HCT116 (cell line): ENCODE measurements at regions of chr4 and their contacts with region 1.

Region 1: DNA sequence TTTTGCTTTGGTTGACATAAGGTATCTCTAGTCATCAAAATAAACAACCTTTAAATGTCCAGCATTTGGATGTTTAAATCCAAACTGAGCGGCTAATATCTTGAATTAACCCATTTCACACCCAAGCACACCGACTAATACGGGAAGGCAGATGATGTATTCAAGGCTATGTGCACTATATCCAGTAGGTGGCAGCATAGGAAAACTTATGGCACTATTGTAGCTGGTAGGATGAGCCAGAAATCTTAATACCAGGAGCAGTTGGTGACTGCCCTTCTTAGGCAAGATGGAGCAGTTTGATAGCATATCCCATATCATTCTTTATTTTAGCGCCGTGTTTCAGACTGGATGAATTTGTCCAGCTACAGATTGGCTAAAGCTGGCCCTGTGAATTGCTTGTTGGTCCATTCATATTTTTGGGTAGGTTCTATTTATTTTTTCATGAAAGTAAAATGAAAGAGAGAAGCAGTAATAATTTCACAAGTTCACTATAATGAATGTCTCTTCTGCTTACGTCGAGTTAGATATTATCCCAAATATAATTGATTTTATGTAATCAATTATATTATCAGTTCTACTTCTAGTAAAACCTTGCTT is 24.4 kb downstream of the UCHL1 start:
- DNase-seq: peak; percentile 82
- ATAC-seq: peak; percentile 100
- H3K4me3 ChIP-seq: no peak overlapping the region
- H3K27ac ChIP-seq: no peak overlapping the region
- H3K4me1 ChIP-seq: no peaks in the 10 kb centered on the region
- H3K27me3 ChIP-seq: no peaks in the 10 kb centered on the region
- CTCF ChIP-seq: peak; percentile 75 to 91 (median 90)
- POLR2A ChIP-seq: no peak
- RAD21 ChIP-seq: peak; percentile 99

Region 2: DNA sequence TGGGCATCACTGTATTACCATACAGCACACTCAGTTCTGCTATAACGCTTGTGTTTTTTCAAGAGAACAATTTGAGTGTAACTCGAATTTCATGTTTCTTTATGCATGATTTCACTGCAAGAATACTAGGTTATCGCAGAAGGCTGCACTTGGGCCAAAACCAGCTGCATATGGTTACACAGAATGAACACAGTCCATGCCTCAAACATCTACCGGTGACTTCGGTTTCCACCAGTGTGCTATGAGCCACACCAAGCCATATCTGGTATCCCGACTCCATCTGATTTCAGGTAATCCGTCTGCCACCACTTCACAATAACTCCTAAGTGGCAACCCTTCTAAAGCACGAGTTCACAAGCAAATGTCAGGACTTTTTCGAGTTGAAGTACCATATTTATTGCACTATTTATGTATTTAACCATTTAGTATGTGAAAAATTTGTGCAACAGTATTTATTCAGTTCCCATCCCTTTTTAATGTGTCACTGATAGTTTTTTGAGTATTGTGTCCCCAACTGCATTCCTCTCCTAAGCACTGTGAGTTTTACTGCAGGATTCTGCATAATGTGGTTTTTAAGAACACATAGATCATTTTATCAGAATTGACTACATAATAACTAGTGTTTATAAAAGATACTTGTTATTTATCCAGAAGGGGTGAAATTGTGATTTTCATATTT is 178.6 kb before region 1 on chr4:
- CTCF ChIA-PET with region 1: no interaction called
- POLR2A ChIA-PET with region 1: no interaction called
- RAD21 ChIA-PET with region 1: no interaction called
- intact Hi-C with region 1: no loop called
- DNase-seq: no peak
- ATAC-seq: no peak
- H3K4me3 ChIP-seq: no peak overlapping the region
- H3K27ac ChIP-seq: no peak overlapping the region
- H3K4me1 ChIP-seq: peaks cover 0 to 3% of the 10 kb centered on the region in 2 experiments; a peak in 1 of 4 replicates
- H3K27me3 ChIP-seq: no peaks in the 10 kb centered on the region
- CTCF ChIP-seq: no peak
- POLR2A ChIP-seq: no peak
- RAD21 ChIP-seq: no peak

Region 3: GRCh38 chr4:41141900-41142299 is 139.2 kb before region 1 on chr4:
- CTCF ChIA-PET with region 1: no interaction called
- POLR2A ChIA-PET with region 1: no interaction called
- RAD21 ChIA-PET with region 1: no interaction called
- intact Hi-C with region 1: no loop called
- DNase-seq: no peak
- ATAC-seq: no peak
- H3K4me3 ChIP-seq: no peak overlapping the region
- H3K27ac ChIP-seq: peak overlapping the region; percentile 87
- H3K4me1 ChIP-seq: peaks cover 55% of the 10 kb centered on the region in 2 experiments
- H3K27me3 ChIP-seq: no peaks in the 10 kb centered on the region
- CTCF ChIP-seq: no peak
- POLR2A ChIP-seq: no peak
- RAD21 ChIP-seq: no peak

Region 4: DNA sequence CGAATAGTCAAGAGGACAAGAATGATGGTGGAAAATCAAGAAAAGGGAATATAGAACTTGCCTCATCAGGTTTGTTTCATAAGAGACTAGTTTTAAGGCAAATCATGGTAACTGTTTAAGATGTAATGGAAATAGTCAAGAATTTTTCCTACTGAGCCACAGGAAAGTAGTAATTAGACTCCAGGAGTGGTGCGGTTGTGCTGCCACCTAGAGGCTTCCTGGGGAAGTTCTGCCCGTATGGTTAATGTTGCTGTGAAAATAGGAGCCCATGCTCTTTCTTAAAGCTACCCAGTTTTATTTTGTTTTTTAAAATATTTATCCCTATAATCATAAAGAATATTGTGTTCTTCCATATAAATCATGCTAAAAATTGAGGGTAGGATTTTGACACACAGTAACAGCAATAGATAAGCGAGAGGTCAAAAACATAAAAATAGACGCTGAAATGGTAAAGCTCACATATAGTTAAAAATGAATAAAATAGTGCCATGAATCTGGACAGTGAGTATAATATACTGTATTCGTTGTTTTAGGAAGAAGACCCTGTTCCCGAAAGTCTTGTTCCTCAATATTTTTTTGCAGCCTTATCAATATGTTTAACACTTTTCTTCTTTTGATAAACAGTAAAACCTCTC is 380.4 kb after region 1 on chr4:
- CTCF ChIA-PET with region 1: interaction called, 105 read pairs
- POLR2A ChIA-PET with region 1: interaction called, 5 read pairs
- RAD21 ChIA-PET with region 1: interaction called, 9 to 13 read pairs
- intact Hi-C with region 1: loop called (anchors 1 kb)
- DNase-seq: peak; percentile 31
- ATAC-seq: peak; percentile 86
- H3K4me3 ChIP-seq: no peak overlapping the region
- H3K27ac ChIP-seq: no peak overlapping the region
- H3K4me1 ChIP-seq: peaks cover 0 to 6% of the 10 kb centered on the region in 2 experiments; a peak in 1 of 4 replicates
- H3K27me3 ChIP-seq: no peaks in the 10 kb centered on the region
- CTCF ChIP-seq: peak; percentile 70 to 96 (median 90)
- POLR2A ChIP-seq: no peak
- RAD21 ChIP-seq: peak; percentile 90

Region 5: GRCh38 chr4:41734366-41734765 is 453.2 kb after region 1 on chr4:
- CTCF ChIA-PET with region 1: no interaction called
- POLR2A ChIA-PET with region 1: no interaction called
- RAD21 ChIA-PET with region 1: no interaction called
- intact Hi-C with region 1: no loop called
- DNase-seq: no peak
- ATAC-seq: no peak
- H3K4me3 ChIP-seq: no peak overlapping the region
- H3K27ac ChIP-seq: no peak overlapping the region
- H3K4me1 ChIP-seq: no peaks in the 10 kb centered on the region
- H3K27me3 ChIP-seq: peaks cover 7% of the 10 kb centered on the region; the same call in 1 of the 2 replicates
- CTCF ChIP-seq: no peak
- POLR2A ChIP-seq: no peak
- RAD21 ChIP-seq: no peak

Region 6: DNA sequence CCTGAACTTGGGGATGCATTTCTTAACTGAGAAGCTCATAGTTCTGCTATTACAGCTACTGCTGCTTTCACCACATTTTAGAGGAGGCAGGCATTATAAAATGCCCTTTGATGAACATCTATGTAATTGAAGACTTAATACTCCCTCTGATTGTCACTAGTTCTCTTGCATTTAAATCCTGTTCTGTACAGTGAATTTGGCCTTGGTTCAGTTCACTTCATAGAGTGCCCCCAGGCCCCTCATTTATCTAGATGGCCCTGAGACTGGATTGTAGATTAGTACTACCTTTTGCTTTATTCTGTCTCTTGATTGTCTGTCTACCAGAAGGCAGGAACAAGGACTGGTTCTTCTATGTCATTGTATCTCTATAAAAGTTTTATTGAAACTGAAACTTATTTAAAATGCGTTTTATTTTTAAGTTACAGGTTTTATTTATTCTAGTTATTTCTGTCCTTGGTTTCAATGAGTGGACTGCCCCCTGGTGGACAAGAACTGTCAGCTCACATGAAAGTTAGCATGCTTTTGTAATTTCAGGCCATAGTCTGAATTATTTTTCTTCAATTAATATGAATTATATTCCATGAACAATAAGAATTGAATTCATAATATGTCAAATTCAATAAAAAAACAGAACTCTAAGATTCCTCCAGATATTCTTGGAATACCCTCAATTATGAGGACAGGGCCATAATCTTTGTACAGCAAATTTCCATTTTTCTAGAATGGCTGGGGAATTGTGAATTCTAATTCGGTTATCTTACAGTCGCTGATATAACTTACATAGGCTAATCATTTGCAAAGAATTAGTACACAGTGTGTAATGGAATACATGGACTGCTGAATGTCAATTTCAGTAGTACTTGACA is 606.9 kb after region 1 on chr4:
- CTCF ChIA-PET with region 1: interaction called, 10 read pairs
- POLR2A ChIA-PET with region 1: no interaction called
- RAD21 ChIA-PET with region 1: no interaction called
- intact Hi-C with region 1: loop called (anchors 2 kb)
- DNase-seq: peak; percentile 34
- ATAC-seq: no peak
- H3K4me3 ChIP-seq: no peak overlapping the region
- H3K27ac ChIP-seq: no peak overlapping the region
- H3K4me1 ChIP-seq: no peaks in the 10 kb centered on the region; a peak in 1 of 4 replicates
- H3K27me3 ChIP-seq: no peaks in the 10 kb centered on the region
- CTCF ChIP-seq: peak; percentile 74 to 90 (median 82)
- POLR2A ChIP-seq: no peak
- RAD21 ChIP-seq: peak; percentile 76

Region 7: DNA sequence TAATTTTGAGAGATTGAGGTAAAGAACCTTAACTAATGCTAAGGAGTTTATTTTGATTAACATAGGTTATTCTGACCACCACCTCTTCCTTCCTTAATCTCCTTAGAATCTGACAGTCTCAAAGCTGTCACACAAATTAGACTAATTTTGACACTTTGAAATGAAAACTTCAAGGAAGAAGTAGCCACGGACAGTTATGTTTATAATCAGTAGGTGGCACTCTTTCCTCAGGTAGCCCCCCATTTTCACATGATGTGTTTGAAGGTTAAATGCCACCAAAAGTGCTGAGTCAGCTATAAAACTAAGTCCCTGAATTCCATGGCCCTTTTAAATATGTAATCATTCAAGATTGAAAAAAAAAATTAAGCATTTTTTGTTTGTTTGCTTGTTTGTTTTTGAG is 676.5 kb after region 1 on chr4:
- CTCF ChIA-PET with region 1: no interaction called
- POLR2A ChIA-PET with region 1: no interaction called
- RAD21 ChIA-PET with region 1: no interaction called
- intact Hi-C with region 1: loop called (anchors 5 kb)
- DNase-seq: peak; percentile 24
- ATAC-seq: peak; percentile 59; the same call in 1 of the 2 replicates
- H3K4me3 ChIP-seq: no peak overlapping the region
- H3K27ac ChIP-seq: no peak overlapping the region
- H3K4me1 ChIP-seq: no peaks in the 10 kb centered on the region
- H3K27me3 ChIP-seq: no peaks in the 10 kb centered on the region
- CTCF ChIP-seq: peak; percentile 30 to 64 (median 51); a peak in 5 of 6 replicates
- POLR2A ChIP-seq: no peak
- RAD21 ChIP-seq: peak; percentile 63

Region 8: GRCh38 chr4:42786350-42787078 is 1505.4 kb after region 1 on chr4:
- CTCF ChIA-PET with region 1: no interaction called
- POLR2A ChIA-PET with region 1: no interaction called
- RAD21 ChIA-PET with region 1: no interaction called
- intact Hi-C with region 1: no loop called
- DNase-seq: no peak
- ATAC-seq: no peak
- H3K4me3 ChIP-seq: no peak overlapping the region
- H3K27ac ChIP-seq: no peak overlapping the region
- H3K4me1 ChIP-seq: no peaks in the 10 kb centered on the region
- H3K27me3 ChIP-seq: no peaks in the 10 kb centered on the region
- CTCF ChIP-seq: no peak
- POLR2A ChIP-seq: no peak
- RAD21 ChIP-seq: no peak